ENCODE measurements at regions of chr2 and their contacts with region 1.

Region 1: DNA sequence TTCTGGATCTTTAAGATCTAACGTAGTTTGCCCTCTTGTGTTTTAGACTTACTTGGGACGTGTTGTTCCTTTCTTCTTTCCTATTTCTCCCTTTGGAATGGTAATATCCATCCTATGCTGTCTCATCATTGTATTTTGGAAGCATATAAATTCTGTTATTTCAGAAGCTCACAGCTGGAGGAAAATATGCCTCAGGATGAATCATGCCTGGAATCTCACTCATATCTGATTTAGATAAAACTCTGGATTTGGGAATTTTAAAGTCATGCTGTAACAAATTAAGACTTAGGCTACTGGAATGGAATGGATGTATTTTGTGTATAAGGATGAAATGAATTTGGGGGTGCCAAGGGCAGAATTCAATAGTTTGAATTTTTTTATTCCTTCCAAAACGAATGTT is 245.2 kb upstream of the GULP1 start:
- DNase-seq: no peak
- H3K4me3 ChIP-seq: no peak overlapping the region
- H3K27ac ChIP-seq: no peak overlapping the region
- H3K4me1 ChIP-seq: no peaks in the 10 kb centered on the region
- H3K27me3 ChIP-seq: no peaks in the 10 kb centered on the region
- CTCF ChIP-seq: no peak
- POLR2A ChIP-seq: no peak

Region 2: GRCh38 chr2:187826023-187826422 is 220.4 kb before region 1 on chr2:
- intact Hi-C with region 1: no loop called
- DNase-seq: no peak
- H3K4me3 ChIP-seq: no peak overlapping the region
- H3K27ac ChIP-seq: no peak overlapping the region
- H3K4me1 ChIP-seq: no peaks in the 10 kb centered on the region
- H3K27me3 ChIP-seq: no peaks in the 10 kb centered on the region
- CTCF ChIP-seq: no peak
- POLR2A ChIP-seq: no peak

Region 3: GRCh38 chr2:188003800-188004199 is 42.6 kb before region 1 on chr2:
- intact Hi-C with region 1: loop called (anchors 5 kb)
- DNase-seq: no peak
- H3K4me3 ChIP-seq: no peak overlapping the region
- H3K27ac ChIP-seq: no peak overlapping the region
- H3K4me1 ChIP-seq: no peaks in the 10 kb centered on the region
- H3K27me3 ChIP-seq: no peaks in the 10 kb centered on the region
- CTCF ChIP-seq: no peak
- POLR2A ChIP-seq: no peak

Measured in breast epithelium (tissue), 4 donors.